Natural killer cell (primary cell): ENCODE measurements at regions of chr10 and their contacts with region 1.

Region 1: DNA sequence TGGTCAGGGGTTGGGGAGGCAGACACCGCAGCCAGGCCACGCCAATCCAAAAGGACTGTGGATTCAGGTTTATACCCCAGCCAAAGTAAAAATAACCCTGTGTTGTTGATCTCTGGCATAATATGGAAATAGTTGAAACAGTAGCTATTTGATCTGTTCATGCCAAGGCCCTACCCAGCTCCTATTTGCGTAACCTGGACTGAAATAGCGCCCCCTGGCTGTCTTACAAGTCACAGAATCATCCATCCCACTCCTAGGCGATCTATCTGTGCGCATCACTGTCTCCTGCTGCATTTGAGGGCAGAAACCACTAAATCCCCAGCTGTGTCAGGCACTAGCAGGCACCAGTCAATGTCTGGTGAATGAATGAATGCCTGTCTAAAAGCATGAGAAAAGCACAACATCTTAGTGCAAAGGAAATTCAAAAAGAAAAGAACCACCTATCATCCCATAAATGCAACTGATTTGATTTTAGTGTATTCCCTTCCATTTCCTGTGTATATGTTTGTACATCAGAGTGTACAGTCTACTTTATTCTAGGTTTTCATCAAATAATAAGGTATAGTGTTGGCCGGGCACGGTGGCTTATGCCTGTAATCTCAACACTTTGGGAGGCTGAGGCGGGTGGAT is 160.0 kb downstream of the SLIT1 start:
- DNase-seq: peak; percentile 35 to 75
- ATAC-seq: peak; percentile 64 to 68 (median 66)
- H3K4me3 ChIP-seq: no peak overlapping the region
- H3K4me3 Mint-ChIP-seq: no peak overlapping the region
- H3K27ac ChIP-seq: no peak overlapping the region
- H3K27ac Mint-ChIP-seq: no peak overlapping the region
- H3K4me1 ChIP-seq: no peaks in the 10 kb centered on the region
- H3K4me1 Mint-ChIP-seq: no peaks in the 10 kb centered on the region
- H3K27me3 ChIP-seq: no peaks in the 10 kb centered on the region
- H3K27me3 Mint-ChIP-seq: peaks cover 0 to 2% of the 10 kb centered on the region in 2 donors
- CTCF ChIP-seq: peak; percentile 73

Region 2: GRCh38 chr10:96395931-96396877 is 629.5 kb before region 1 on chr10:
- intact Hi-C with region 1: loop called (anchors 2 kb)
- DNase-seq: peak; percentile 46 to 82
- ATAC-seq: peak; percentile 71 to 88 (median 72)
- H3K4me3 ChIP-seq: no peak overlapping the region
- H3K4me3 Mint-ChIP-seq: no peak overlapping the region
- H3K27ac ChIP-seq: no peak overlapping the region
- H3K27ac Mint-ChIP-seq: no peak overlapping the region
- H3K4me1 ChIP-seq: peaks cover 12% of the 10 kb centered on the region
- H3K4me1 Mint-ChIP-seq: peaks cover 5 to 7% of the 10 kb centered on the region in 2 donors
- H3K27me3 ChIP-seq: no peaks in the 10 kb centered on the region
- H3K27me3 Mint-ChIP-seq: peaks cover 18 to 30% of the 10 kb centered on the region in 2 donors
- CTCF ChIP-seq: peak; percentile 71

Region 3: DNA sequence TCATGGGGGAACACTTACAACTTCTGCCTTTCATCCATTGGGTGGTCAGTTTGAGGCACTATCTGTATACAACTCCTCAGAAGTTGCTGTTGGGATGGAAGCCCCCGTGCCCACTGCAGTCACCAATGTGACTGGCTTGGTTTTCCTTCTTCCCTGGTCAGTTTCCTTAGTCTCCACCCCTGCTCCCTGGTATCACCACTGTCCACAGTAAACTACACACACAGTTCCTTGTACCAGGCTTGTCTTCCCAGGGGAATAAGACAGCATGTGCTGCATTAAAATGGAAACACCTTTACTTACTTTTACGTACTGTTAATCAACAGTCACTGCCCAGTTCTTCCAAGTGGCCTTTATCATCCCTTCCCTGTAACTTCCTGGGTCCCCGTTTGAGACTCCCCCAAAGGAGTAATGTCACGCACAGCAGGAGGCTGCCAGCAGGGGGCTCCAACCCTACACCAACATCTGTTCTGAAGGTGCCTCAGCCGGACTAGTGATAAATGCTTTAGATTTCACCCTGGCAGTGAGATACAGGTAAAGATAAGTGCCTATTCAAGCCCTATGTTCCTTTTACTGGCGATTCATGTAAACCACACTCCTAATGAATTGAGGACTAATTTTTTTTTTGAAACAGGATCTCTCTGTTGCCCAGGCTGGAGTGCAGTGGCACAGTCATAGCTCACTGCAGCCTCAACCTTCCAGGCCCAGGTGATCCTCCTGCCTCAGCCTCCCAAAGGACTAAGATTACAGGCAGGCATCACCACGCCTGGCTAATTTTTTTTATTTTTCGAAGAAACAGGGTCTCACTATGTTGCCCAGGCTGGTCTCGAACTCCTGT is 260.1 kb before region 1 on chr10:
- intact Hi-C with region 1: loop called (anchors 1 kb)
- DNase-seq: peak; percentile 73 to 85
- ATAC-seq: peak; percentile 92 to 100 (median 99)
- H3K4me3 ChIP-seq: no peak overlapping the region
- H3K4me3 Mint-ChIP-seq: no peak overlapping the region
- H3K27ac ChIP-seq: no peak overlapping the region
- H3K27ac Mint-ChIP-seq: peak overlapping the region in 1 of 2 donors; percentile 47
- H3K4me1 ChIP-seq: peaks cover 15% of the 10 kb centered on the region
- H3K4me1 Mint-ChIP-seq: peaks cover 8 to 9% of the 10 kb centered on the region in 2 donors
- H3K27me3 ChIP-seq: no peaks in the 10 kb centered on the region
- H3K27me3 Mint-ChIP-seq: no peaks in the 10 kb centered on the region
- CTCF ChIP-seq: peak; percentile 77

Region 4: DNA sequence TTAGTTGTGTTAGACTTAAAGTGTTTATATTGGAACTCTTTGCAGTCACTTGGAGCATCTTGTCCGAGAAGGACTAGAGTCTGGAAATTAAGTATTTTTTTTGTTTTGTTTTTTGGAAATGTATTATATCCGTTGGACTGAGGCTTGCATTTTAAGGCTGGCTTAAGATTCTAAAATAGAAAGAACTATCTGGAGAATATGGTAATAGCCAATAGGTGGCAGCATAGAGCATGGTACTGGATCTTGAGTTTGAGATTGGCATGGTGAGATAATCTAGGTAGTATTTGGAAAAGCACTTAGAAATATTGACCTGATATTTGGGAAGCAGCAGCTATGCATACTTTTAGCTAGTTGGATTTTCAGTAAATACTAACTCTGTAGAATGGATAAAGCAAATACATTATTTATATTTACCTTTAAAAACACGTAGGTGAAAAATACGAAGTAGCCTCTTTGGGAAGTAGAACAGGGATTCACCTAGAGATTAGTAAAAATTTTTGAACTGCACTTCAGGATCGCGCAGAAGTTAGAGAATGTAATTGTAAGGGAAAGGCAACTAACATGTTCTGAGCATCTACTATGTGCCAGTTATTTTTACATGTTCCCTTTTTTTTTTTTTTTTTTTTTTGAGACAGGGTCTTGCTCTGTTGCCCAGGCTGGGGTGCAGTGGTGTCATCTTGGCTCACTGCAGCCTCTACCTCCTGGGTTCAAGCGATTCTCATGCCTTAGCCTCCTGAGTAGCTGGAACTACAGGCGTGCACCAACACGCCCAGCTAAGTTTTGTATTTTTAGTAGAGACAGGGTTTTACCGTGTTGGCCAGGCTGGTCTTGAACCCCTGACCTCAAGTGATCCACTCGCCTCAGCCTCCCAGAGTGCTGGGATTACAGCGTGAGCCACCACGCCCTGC is 115.0 kb before region 1 on chr10:
- intact Hi-C with region 1: no loop called
- DNase-seq: peak in 1 of 2 donors; percentile 72
- ATAC-seq: peak; percentile 77 to 85 (median 78)
- H3K4me3 ChIP-seq: no peak overlapping the region
- H3K4me3 Mint-ChIP-seq: no peak overlapping the region
- H3K27ac ChIP-seq: no peak overlapping the region
- H3K27ac Mint-ChIP-seq: no peak overlapping the region
- H3K4me1 ChIP-seq: no peaks in the 10 kb centered on the region
- H3K4me1 Mint-ChIP-seq: peaks cover 28% of the 10 kb centered on the region in 2 donors
- H3K27me3 ChIP-seq: no peaks in the 10 kb centered on the region
- H3K27me3 Mint-ChIP-seq: no peaks in the 10 kb centered on the region
- CTCF ChIP-seq: peak; percentile 79

Region 5: DNA sequence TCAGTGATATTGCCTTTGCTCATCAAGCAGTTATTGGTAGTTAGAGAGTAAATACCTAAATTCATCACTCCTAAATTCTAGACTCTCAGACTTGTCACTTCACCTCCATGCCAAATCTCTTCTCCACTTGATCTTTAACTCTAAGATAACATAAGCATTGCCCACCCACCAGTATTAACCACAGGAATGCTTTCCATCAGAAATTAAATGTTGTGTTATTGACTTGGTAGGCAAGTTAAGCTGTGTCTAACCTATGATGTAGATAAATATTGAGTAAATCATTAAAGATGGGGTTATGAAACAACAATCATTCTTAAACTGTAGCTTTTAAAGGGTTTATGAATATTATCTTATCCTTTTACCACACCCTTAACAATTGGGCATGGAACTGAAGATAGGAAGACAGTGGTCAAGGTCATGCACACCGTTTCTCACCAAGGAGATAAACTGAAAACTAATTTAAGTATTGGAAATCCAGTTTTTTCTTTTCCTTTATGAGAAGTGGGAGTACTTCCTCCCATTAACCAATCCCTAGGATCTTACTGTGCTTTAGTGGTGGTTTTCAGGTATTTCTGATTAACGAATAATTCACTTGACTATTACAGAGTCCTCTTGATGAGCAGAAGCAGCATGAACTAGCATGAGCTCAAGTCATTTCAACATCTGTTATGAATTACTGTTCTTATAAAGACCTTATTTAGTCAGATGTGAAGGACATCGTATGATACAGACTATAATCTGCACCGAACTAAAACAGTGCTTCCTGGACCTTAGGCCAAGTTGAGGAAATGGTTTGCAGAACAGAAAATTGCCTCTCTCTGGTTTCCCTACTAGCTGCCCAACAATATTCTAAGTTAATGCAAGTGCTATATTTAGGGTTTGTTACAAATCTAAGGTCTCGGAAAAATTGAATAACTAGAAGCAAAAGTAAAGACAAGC is 51.6 kb before region 1 on chr10:
- intact Hi-C with region 1: no loop called
- DNase-seq: no peak
- ATAC-seq: no peak
- H3K4me3 ChIP-seq: no peak overlapping the region
- H3K4me3 Mint-ChIP-seq: no peak overlapping the region
- H3K27ac ChIP-seq: no peak overlapping the region
- H3K27ac Mint-ChIP-seq: no peak overlapping the region
- H3K4me1 ChIP-seq: no peaks in the 10 kb centered on the region
- H3K4me1 Mint-ChIP-seq: no peaks in the 10 kb centered on the region
- H3K27me3 ChIP-seq: no peaks in the 10 kb centered on the region
- H3K27me3 Mint-ChIP-seq: no peaks in the 10 kb centered on the region
- CTCF ChIP-seq: no peak